ENCODE measurements at regions of chr2 and their contacts with region 1.

Region 1: DNA sequence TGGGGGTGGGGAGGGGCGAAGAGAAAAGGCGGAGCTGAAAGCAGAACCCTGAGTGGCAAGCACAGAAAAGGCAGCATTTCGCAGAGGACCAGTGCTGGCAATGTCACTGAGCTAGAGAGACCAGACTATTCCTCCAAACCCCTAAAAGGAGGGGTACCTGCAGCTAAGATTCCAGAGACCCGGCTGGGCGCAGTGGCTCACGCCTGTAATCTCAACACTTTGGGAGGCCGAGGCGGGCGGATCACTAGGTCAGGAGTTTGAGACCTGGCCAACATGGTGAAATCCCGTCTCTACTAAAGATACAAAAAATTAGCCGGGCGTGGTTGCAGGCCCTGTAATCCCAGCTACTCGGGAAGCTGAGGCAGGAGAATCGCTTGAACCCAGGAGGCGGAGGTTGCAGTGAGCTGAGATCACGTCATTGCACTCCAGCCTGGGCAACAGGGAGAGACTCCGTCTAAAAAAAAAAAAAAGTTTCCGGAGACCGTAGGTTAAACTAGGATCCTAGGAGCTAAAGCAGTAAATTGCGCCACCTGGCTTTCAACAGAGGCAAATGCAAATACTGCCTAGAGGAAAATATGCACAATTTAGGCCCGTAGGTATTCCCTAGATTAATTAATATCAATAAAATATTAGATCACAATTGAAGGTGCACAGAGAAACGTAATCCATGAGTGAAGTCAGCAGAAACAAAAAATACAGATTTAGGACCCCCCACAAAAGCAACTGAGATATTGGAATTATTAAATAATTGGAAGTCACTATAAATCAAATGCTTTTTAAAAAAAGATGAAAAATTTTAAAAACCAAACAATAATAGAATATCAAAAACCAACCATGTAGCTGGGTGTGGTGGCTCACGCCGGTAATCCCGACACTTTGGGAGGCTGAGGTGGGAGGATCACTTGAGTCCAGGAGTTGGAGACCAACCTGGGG is 4.9 kb downstream of the UCN start:
- DNase-seq: peak; percentile 51
- H3K4me3 Mint-ChIP-seq: peak overlapping the region; percentile 41
- H3K27ac Mint-ChIP-seq: no peak overlapping the region
- H3K4me1 Mint-ChIP-seq: peaks cover 9% of the 10 kb centered on the region
- H3K27me3 Mint-ChIP-seq: peaks cover 26% of the 10 kb centered on the region

Region 2: GRCh38 chr2:26968001-26968400 is 335.4 kb before region 1 on chr2:
- CTCF ChIA-PET with region 1: interaction called, 11 read pairs
- POLR2A ChIA-PET with region 1: no interaction called
- DNase-seq: no peak
- H3K4me3 Mint-ChIP-seq: no peak overlapping the region
- H3K27ac Mint-ChIP-seq: no peak overlapping the region
- H3K4me1 Mint-ChIP-seq: peaks cover 21% of the 10 kb centered on the region
- H3K27me3 Mint-ChIP-seq: peaks cover 44% of the 10 kb centered on the region

Region 3: DNA sequence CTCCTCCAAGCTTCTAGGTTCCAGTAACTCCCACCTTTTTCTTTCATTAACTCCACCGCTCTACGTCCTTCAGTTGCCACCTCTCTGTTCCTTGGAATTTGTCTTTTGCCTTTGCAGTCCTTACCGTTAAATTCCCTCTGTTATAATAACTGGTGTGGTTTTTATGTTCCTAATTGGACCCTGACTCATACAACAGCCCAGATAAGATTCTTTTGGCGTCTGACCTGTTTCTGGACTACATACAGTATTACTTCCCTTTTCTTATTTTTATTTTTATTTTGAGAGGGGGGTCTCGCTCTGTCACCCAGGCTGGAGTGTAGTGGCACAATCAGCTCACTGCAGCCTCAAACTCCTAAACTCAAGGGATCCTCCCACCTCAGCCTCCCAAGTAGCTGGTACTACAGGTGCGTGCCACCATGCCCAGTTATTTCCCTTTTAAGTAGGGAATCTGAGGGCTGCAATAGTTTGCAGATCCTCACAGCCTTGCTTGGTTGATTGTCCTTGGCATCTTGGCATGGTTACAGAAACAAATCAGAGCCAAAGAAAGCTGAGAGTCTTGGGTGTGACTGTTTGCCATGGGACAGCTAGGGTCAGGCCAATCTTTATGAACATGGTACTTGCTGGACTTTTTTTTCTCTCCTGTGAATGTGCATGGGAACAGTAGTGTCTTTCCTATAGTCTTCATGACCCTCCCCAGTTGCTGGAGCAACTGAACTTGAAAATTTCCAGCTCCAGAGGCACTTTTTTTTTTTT is 132.6 kb before region 1 on chr2:
- CTCF ChIA-PET with region 1: interaction called, 10 read pairs
- POLR2A ChIA-PET with region 1: no interaction called
- DNase-seq: no peak
- H3K4me3 Mint-ChIP-seq: no peak overlapping the region
- H3K27ac Mint-ChIP-seq: no peak overlapping the region
- H3K4me1 Mint-ChIP-seq: peaks cover 3% of the 10 kb centered on the region
- H3K27me3 Mint-ChIP-seq: peaks cover 13% of the 10 kb centered on the region

Region 4: GRCh38 chr2:27264753-27265535 is 38.4 kb before region 1 on chr2:
- CTCF ChIA-PET with region 1: interaction called, 15 read pairs
- POLR2A ChIA-PET with region 1: no interaction called
- DNase-seq: peak; percentile 47
- H3K4me3 Mint-ChIP-seq: peak overlapping the region; percentile 50
- H3K27ac Mint-ChIP-seq: no peak overlapping the region
- H3K4me1 Mint-ChIP-seq: peaks cover 34% of the 10 kb centered on the region
- H3K27me3 Mint-ChIP-seq: peaks cover 46% of the 10 kb centered on the region

Region 5: GRCh38 chr2:27291865-27292264 is 11.5 kb before region 1 on chr2:
- CTCF ChIA-PET with region 1: interaction called, 48 read pairs
- POLR2A ChIA-PET with region 1: no interaction called
- DNase-seq: no peak
- H3K4me3 Mint-ChIP-seq: no peak overlapping the region
- H3K27ac Mint-ChIP-seq: no peak overlapping the region
- H3K4me1 Mint-ChIP-seq: no peaks in the 10 kb centered on the region
- H3K27me3 Mint-ChIP-seq: peaks cover 40% of the 10 kb centered on the region

Region 6: GRCh38 chr2:27322766-27323595 is 19.6 kb after region 1 on chr2 and contains the start of gene MPV17:
- CTCF ChIA-PET with region 1: interaction called, 27 read pairs
- POLR2A ChIA-PET with region 1: interaction called, 4 read pairs
- DNase-seq: peak; percentile 91
- H3K4me3 Mint-ChIP-seq: peak within 1 kb of the TSS; percentile 97
- H3K27ac Mint-ChIP-seq: peak within 1 kb of the TSS; percentile 79
- H3K4me1 Mint-ChIP-seq: peaks cover 22% of the 10 kb centered on the region
- H3K27me3 Mint-ChIP-seq: no peaks in the 10 kb centered on the region
- total RNA-seq, gene MPV17: 83.3 to 83.9 TPM

Region 7: GRCh38 chr2:27400348-27401135 is 97.2 kb after region 1 on chr2:
- CTCF ChIA-PET with region 1: no interaction called
- POLR2A ChIA-PET with region 1: no interaction called
- DNase-seq: no peak
- H3K4me3 Mint-ChIP-seq: no peak overlapping the region
- H3K27ac Mint-ChIP-seq: peak overlapping the region; percentile 79
- H3K4me1 Mint-ChIP-seq: peaks cover 54% of the 10 kb centered on the region
- H3K27me3 Mint-ChIP-seq: no peaks in the 10 kb centered on the region

Region 8: DNA sequence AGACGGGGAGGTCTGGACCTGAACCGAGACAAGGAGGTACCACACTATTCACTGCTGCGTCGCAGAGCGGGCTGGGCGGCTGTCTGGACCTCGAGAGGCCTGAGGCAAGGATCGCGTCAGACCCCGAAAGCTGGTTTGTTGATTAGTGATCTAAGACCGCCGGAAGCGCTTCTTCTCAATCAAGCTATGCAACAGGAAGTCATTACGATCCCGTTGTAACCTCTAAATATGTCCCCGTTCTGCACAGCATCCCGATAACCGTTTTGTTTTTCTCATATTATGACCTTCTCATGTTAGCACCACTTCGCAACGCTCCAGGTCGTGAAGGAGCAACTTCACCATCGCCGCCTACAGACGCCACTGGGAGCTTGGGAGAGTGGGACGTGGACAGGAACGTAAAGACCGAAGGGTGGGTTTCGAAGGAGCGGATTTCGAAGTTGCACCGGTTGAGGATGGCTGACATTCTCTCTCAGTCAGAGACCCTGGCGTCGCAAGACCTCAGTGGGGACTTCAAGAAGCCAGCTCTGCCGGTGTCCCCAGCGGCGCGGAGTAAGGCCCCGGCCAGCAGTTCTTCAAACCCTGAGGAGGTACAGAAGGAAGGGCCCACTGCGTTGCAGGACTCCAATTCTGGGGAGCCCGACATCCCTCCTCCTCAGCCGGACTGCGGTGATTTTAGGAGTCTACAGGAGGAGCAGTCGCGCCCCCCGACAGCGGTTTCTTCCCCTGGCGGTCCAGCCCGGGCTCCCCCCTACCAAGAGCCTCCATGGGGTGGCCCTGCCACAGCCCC is 360.3 kb after region 1 on chr2 and contains the starts of genes SLC4A1AP and SUPT7L:
- CTCF ChIA-PET with region 1: no interaction called
- POLR2A ChIA-PET with region 1: no interaction called
- DNase-seq: peak; percentile 78
- H3K4me3 Mint-ChIP-seq: peak within 1 kb of the TSS; percentile 99
- H3K27ac Mint-ChIP-seq: peak within 1 kb of the TSS; percentile 100
- H3K4me1 Mint-ChIP-seq: peaks cover 60% of the 10 kb centered on the region
- H3K27me3 Mint-ChIP-seq: no peaks in the 10 kb centered on the region
- total RNA-seq, gene SLC4A1AP: 27.3 to 27.9 TPM
- total RNA-seq, gene SUPT7L: 36.5 to 37.2 TPM

Region 9: GRCh38 chr2:27735263-27735953 is 432.0 kb after region 1 on chr2:
- CTCF ChIA-PET with region 1: no interaction called
- POLR2A ChIA-PET with region 1: no interaction called
- DNase-seq: peak; percentile 44
- H3K4me3 Mint-ChIP-seq: no peak overlapping the region
- H3K27ac Mint-ChIP-seq: no peak overlapping the region
- H3K4me1 Mint-ChIP-seq: peaks cover 9% of the 10 kb centered on the region
- H3K27me3 Mint-ChIP-seq: no peaks in the 10 kb centered on the region

Measured in activated CD4-positive, alpha-beta memory T cell treated with anti-CD3 and anti-CD28 coated beads, Interleukin-2, amount 10 ng/mL, durations not matched to agents 7 days and 5 days (primary cell).